ENCODE measurements at regions of chr10 and their contacts with region 1.

Region 1: DNA sequence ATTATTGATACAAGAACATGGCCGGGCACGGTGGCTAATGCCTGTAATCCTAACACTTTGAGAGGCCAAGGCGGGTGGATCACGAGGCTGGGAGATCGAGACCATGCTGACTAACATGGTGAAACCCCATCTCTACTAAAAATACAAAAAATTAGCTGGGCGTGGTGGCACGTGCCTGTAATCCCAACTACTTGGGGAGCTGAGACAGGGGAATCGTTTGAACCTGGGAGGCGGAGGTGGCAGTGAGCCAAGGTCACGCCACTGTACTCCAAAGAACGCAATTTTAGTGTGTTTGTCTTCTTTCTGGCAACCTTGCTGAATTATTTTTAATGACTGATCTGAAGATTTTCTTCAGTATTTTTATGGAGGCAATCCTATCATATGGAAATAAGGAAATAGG is 46.2 kb downstream of the IDE start:
- DNase-seq: no peak
- ATAC-seq: no peak
- H3K4me3 ChIP-seq: no peak overlapping the region
- H3K27ac ChIP-seq: no peak overlapping the region
- H3K4me1 ChIP-seq: no peaks in the 10 kb centered on the region
- H3K27me3 ChIP-seq: no peaks in the 10 kb centered on the region
- CTCF ChIP-seq: no peak
- EP300 ChIP-seq: no peak
- POLR2A ChIP-seq: no peak
- RAD21 ChIP-seq: no peak

Region 2: GRCh38 chr10:92490387-92490786 is 37.3 kb before region 1 on chr10:
- CTCF ChIA-PET with region 1: no interaction called
- POLR2A ChIA-PET with region 1: no interaction called
- RAD21 ChIA-PET with region 1: no interaction called
- SMC1A ChIA-PET with region 1: no interaction called
- in situ Hi-C with region 1: no loop called
- intact Hi-C with region 1: no loop called
- DNase-seq: no peak
- ATAC-seq: no peak
- H3K4me3 ChIP-seq: no peak overlapping the region
- H3K27ac ChIP-seq: no peak overlapping the region
- H3K4me1 ChIP-seq: no peaks in the 10 kb centered on the region
- H3K27me3 ChIP-seq: no peaks in the 10 kb centered on the region
- CTCF ChIP-seq: no peak
- EP300 ChIP-seq: no peak
- POLR2A ChIP-seq: no peak
- RAD21 ChIP-seq: no peak

Region 3: DNA sequence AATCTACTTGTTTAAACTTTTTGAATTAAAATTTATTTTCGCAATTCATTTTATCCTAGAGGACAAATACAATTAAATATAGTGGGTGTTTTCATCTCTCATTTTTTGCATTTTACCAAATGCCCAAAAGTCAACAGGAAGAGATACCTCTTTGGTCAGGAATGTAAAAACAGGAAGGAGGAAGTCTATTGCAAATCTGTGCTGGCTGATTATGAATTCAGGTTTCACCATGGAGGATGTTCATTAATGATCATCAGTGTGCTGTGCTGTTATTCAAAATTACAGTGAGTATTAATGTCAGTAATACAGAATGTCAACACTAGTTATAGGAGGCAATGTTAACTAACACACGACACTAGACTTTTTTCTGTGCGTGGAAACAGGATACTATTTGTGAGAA is 345.3 kb after region 1 on chr10:
- CTCF ChIA-PET with region 1: interaction called, 3 read pairs
- POLR2A ChIA-PET with region 1: no interaction called
- RAD21 ChIA-PET with region 1: no interaction called
- SMC1A ChIA-PET with region 1: no interaction called
- in situ Hi-C with region 1: loop called (anchors 10 kb)
- intact Hi-C with region 1: no loop called
- DNase-seq: no peak
- ATAC-seq: no peak
- H3K4me3 ChIP-seq: no peak overlapping the region
- H3K27ac ChIP-seq: no peak overlapping the region
- H3K4me1 ChIP-seq: no peaks in the 10 kb centered on the region
- H3K27me3 ChIP-seq: no peaks in the 10 kb centered on the region
- CTCF ChIP-seq: no peak
- EP300 ChIP-seq: no peak
- POLR2A ChIP-seq: no peak
- RAD21 ChIP-seq: no peak